Activated CD8-positive, alpha-beta T cell treated with anti-CD3 and anti-CD28 coated beads for 36 hours (primary cell): ENCODE measurements at regions of chr18 and their contacts with region 1.

Region 1: GRCh38 chr18:6569813-6570212 is 155.1 kb upstream of the L3MBTL4 start:
- DNase-seq: no peak
- ATAC-seq: no peak
- H3K4me3 Mint-ChIP-seq: no peak overlapping the region
- H3K27ac Mint-ChIP-seq: no peak overlapping the region
- H3K4me1 Mint-ChIP-seq: no peaks in the 10 kb centered on the region
- H3K27me3 Mint-ChIP-seq: peaks cover 1% of the 10 kb centered on the region
- CTCF ChIP-seq: no peak

Region 2: GRCh38 chr18:6370886-6371635 is 198.8 kb before region 1 on chr18:
- CTCF ChIA-PET with region 1: no interaction called
- POLR2A ChIA-PET with region 1: no interaction called
- intact Hi-C with region 1: no loop called
- DNase-seq: no peak
- ATAC-seq: no peak
- H3K4me3 Mint-ChIP-seq: no peak overlapping the region
- H3K27ac Mint-ChIP-seq: no peak overlapping the region
- H3K4me1 Mint-ChIP-seq: no peaks in the 10 kb centered on the region
- H3K27me3 Mint-ChIP-seq: no peaks in the 10 kb centered on the region
- CTCF ChIP-seq: no peak

Region 3: GRCh38 chr18:6509832-6510231 is 60.0 kb before region 1 on chr18:
- CTCF ChIA-PET with region 1: no interaction called
- POLR2A ChIA-PET with region 1: no interaction called
- intact Hi-C with region 1: loop called (anchors 10 kb)
- DNase-seq: no peak
- ATAC-seq: no peak
- H3K4me3 Mint-ChIP-seq: no peak overlapping the region
- H3K27ac Mint-ChIP-seq: no peak overlapping the region
- H3K4me1 Mint-ChIP-seq: no peaks in the 10 kb centered on the region
- H3K27me3 Mint-ChIP-seq: no peaks in the 10 kb centered on the region
- CTCF ChIP-seq: no peak

Region 4: GRCh38 chr18:6712401-6712800 is 142.6 kb after region 1 on chr18:
- CTCF ChIA-PET with region 1: no interaction called
- POLR2A ChIA-PET with region 1: no interaction called
- intact Hi-C with region 1: no loop called
- DNase-seq: no peak
- ATAC-seq: no peak
- H3K4me3 Mint-ChIP-seq: no peak overlapping the region
- H3K27ac Mint-ChIP-seq: no peak overlapping the region
- H3K4me1 Mint-ChIP-seq: no peaks in the 10 kb centered on the region
- H3K27me3 Mint-ChIP-seq: no peaks in the 10 kb centered on the region
- CTCF ChIP-seq: no peak